HepG2 (cell line): ENCODE measurements at regions of chr6 and their contacts with region 1.

Region 1: GRCh38 chr6:117449549-117450439 is 24.1 kb upstream of the ROS1 start:
- DNase-seq: peak; percentile 66
- ATAC-seq: peak; percentile 54; the same call in 2 of the 3 replicates
- H3K4me3 ChIP-seq: no peak overlapping the region
- H3K27ac ChIP-seq: no peak overlapping the region
- H3K4me1 ChIP-seq: peaks cover 33% of the 10 kb centered on the region
- H3K27me3 ChIP-seq: peaks cover 2 to 16% of the 10 kb centered on the region in 2 experiments; a peak in 4 of 5 replicates
- CTCF ChIP-seq: peak; percentile 79
- EP300 ChIP-seq: no peak
- POLR2A ChIP-seq: no peak
- RAD21 ChIP-seq: peak; percentile 75

Region 2: DNA sequence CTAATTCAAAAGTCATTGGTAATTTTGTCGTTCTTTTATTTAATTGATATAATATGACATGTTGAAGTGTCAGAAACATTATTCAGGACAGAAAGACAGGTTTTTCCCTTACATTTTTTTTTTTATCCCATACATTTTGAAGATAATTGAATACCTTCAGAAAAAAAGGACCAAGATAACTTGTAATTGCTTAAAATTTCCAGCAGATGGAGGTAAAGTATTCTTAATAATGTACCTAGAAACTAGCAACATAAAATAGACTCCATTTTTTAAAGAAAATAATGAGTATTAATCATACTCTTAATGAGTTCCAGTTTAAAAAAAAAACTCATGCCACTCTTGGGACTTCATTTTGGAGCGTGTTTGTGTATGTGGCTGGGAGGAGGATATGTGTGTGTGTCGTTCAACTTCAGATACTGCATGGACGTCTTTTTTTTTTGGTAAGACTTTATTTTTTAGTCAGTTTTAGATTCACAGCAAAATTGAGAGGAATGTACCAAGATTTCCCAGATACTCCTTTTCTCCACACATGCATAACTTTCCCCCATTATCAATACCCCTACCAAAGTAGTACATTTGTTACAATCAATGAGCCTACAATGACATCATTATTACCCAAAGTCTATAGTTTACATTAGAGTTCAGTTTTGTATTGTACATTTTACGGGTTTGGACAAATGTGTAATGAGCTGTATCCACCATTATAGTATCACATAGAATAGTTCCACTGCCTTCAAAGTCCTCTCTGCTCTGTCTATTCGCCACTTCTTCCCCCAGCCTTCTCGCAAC is 103.5 kb before region 1 on chr6:
- CTCF ChIA-PET with region 1: interaction called, 5 read pairs
- POLR2A ChIA-PET with region 1: no interaction called
- in situ Hi-C with region 1: no loop called
- intact Hi-C with region 1: loop called (anchors 2 kb)
- DNase-seq: peak; percentile 23
- ATAC-seq: no peak
- H3K4me3 ChIP-seq: no peak overlapping the region
- H3K27ac ChIP-seq: no peak overlapping the region
- H3K4me1 ChIP-seq: no peaks in the 10 kb centered on the region; the same call in 1 of the 2 replicates
- H3K27me3 ChIP-seq: no peaks in the 10 kb centered on the region
- CTCF ChIP-seq: peak; percentile 36; the same call in 1 of the 2 replicates
- EP300 ChIP-seq: no peak
- POLR2A ChIP-seq: no peak
- RAD21 ChIP-seq: 0 out of 2 replicates have a peak, but pooled peaks have one; percentile 11

Region 3: DNA sequence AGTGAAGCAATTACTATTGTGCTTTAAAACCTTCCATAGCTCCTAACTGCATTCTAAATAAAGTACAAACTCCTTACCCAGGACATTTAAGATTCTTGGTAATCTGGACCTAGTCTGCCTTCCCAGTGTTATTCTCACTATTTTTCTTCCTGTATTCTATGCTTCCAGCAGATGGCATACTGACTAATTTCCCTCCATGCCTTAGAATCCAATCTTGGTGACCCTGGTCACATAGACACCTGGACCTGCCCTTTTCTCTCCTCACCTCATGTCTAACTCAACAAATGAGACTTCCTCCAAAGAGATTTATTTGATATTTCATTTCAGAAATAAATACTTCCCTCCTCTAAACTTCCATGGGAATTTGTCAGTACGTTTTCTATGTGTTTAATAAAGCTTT is 49.9 kb before region 1 on chr6:
- CTCF ChIA-PET with region 1: no interaction called
- POLR2A ChIA-PET with region 1: no interaction called
- in situ Hi-C with region 1: no loop called
- intact Hi-C with region 1: loop called (anchors 1 kb)
- DNase-seq: peak; percentile 20
- ATAC-seq: peak; percentile 81
- H3K4me3 ChIP-seq: no peak overlapping the region
- H3K27ac ChIP-seq: no peak overlapping the region
- H3K4me1 ChIP-seq: peaks cover 7% of the 10 kb centered on the region; the same call in 1 of the 2 replicates
- H3K27me3 ChIP-seq: no peaks in the 10 kb centered on the region
- CTCF ChIP-seq: peak; percentile 51
- EP300 ChIP-seq: no peak
- POLR2A ChIP-seq: no peak
- RAD21 ChIP-seq: no peak

Region 4: GRCh38 chr6:117555882-117556498 is 106.2 kb after region 1 on chr6:
- CTCF ChIA-PET with region 1: interaction called, 59 read pairs
- POLR2A ChIA-PET with region 1: no interaction called
- in situ Hi-C with region 1: loop called (anchors 5 kb)
- intact Hi-C with region 1: loop called (anchors 1 kb)
- DNase-seq: peak; percentile 27
- ATAC-seq: peak; percentile 21; the same call in 1 of the 3 replicates
- H3K4me3 ChIP-seq: no peak overlapping the region
- H3K27ac ChIP-seq: no peak overlapping the region
- H3K4me1 ChIP-seq: peaks cover 6% of the 10 kb centered on the region; the same call in 1 of the 2 replicates
- H3K27me3 ChIP-seq: no peaks in the 10 kb centered on the region
- CTCF ChIP-seq: peak; percentile 72
- EP300 ChIP-seq: no peak
- POLR2A ChIP-seq: no peak
- RAD21 ChIP-seq: peak; percentile 56

Region 5: DNA sequence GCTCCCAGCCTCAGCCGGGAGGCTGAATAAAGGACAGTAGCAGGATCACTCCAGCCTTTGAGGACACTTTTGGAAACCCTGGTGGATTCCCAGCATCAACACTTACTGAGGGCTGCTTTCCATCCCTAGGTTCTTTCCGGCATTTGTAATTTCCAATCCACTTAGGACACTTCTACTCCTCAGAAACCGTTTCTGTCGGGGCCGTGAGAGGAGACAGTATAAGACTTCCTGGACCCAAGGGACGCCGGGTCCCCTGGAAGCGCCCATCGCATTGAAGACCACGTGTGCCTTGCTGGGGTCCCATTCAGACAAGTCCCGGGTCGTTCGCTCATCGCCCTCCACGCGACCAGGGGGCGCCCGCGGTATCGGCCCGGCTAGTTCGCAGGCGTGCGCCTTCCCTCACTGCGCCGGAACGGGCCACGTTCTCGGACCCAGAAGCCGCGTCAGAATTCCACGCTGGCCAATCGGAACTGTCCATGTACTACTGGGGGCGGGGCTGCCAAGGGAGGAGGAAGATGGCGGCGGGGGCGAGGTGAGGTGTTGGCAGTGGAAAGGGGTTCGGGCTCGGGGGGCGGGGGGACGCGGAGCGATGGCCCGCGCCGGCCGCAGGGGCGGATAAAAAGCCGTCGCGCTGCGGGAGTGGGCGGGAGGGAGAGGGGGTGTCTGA is 225.3 kb after region 1 on chr6 and contains the start of gene NUS1:
- CTCF ChIA-PET with region 1: no interaction called
- POLR2A ChIA-PET with region 1: no interaction called
- in situ Hi-C with region 1: no loop called
- intact Hi-C with region 1: loop called (anchors 5 kb)
- DNase-seq: peak; percentile 97
- ATAC-seq: peak; percentile 96
- H3K4me3 ChIP-seq: peak within 1 kb of the TSS; percentile 86 to 93 (median 88)
- H3K27ac ChIP-seq: peak within 1 kb of the TSS; percentile 62
- H3K4me1 ChIP-seq: peaks cover 55% of the 10 kb centered on the region
- H3K27me3 ChIP-seq: no peaks in the 10 kb centered on the region; a peak in 1 of 5 replicates
- CTCF ChIP-seq: peak; percentile 100
- EP300 ChIP-seq: peak; percentile 29 to 46; a peak in 1 of 4 replicates
- POLR2A ChIP-seq: peak; percentile 50 to 82
- RAD21 ChIP-seq: peak; percentile 62
- total RNA-seq, gene NUS1: 18.3 and 36.5 TPM in 2 replicates

Region 6: GRCh38 chr6:117829594-117830319 is 380.0 kb after region 1 on chr6:
- CTCF ChIA-PET with region 1: interaction called, 3 read pairs
- POLR2A ChIA-PET with region 1: no interaction called
- in situ Hi-C with region 1: no loop called
- intact Hi-C with region 1: loop called (anchors 10 kb)
- DNase-seq: peak; percentile 44
- ATAC-seq: peak; percentile 95
- H3K4me3 ChIP-seq: no peak overlapping the region; a peak in 1 of 6 replicates
- H3K27ac ChIP-seq: no peak overlapping the region
- H3K4me1 ChIP-seq: no peaks in the 10 kb centered on the region
- H3K27me3 ChIP-seq: no peaks in the 10 kb centered on the region
- CTCF ChIP-seq: peak; percentile 58
- EP300 ChIP-seq: no peak
- POLR2A ChIP-seq: no peak
- RAD21 ChIP-seq: no peak

Region 7: GRCh38 chr6:118580585-118581419 is 1131.0 kb after region 1 on chr6:
- CTCF ChIA-PET with region 1: no interaction called
- POLR2A ChIA-PET with region 1: no interaction called
- in situ Hi-C with region 1: no loop called
- intact Hi-C with region 1: loop called (anchors 10 kb)
- DNase-seq: peak; percentile 75
- ATAC-seq: peak; percentile 97
- H3K4me3 ChIP-seq: no peak overlapping the region
- H3K27ac ChIP-seq: no peak overlapping the region
- H3K4me1 ChIP-seq: no peaks in the 10 kb centered on the region
- H3K27me3 ChIP-seq: no peaks in the 10 kb centered on the region; a peak in 1 of 5 replicates
- CTCF ChIP-seq: peak; percentile 92
- EP300 ChIP-seq: no peak
- POLR2A ChIP-seq: no peak
- RAD21 ChIP-seq: peak; percentile 88